CD4-positive, alpha-beta T cell (primary cell): ENCODE measurements at regions of chr15 and their contacts with region 1.

Region 1: DNA sequence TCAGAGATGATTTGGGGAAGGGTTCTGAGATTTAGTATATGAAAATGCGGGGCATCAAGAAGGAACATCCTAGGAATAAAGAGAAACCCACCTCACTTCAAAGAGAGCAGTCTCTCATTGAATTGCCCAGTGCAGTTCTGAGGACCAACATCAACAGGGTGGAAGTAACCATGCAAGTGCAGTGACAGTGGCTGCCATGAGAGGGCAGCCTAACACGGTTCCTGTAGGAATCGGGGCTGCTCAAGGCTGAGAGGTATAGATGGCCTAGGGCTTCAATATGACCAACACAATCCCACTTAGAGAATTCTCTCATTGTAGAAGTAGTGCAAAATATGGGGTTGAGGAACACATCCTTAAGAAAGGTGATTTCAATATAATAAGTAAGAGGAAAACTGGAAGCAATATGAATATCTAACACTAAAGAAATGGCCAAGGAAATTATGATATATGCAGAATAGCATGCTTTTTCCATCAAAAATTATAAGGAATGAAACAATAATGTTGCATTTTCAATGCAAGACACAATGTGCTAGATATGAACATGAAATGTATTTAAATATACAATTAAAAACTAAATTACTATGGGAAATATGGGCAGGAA is 51.1 kb upstream of the ARRDC4 start:
- DNase-seq: peak; percentile 22 to 71 (median 42)
- ATAC-seq: peak; percentile 67
- H3K4me3 ChIP-seq: no peak overlapping the region
- H3K4me3 Mint-ChIP-seq: no peak overlapping the region
- H3K27ac ChIP-seq: no peak overlapping the region
- H3K27ac Mint-ChIP-seq: no peak overlapping the region
- H3K4me1 ChIP-seq: no peaks in the 10 kb centered on the region
- H3K4me1 Mint-ChIP-seq: no peaks in the 10 kb centered on the region
- H3K27me3 ChIP-seq: peaks cover 0 to 2% of the 10 kb centered on the region in 2 experiments
- H3K27me3 Mint-ChIP-seq: peaks cover 19% of the 10 kb centered on the region
- CTCF ChIP-seq: peak; percentile 89

Region 2: DNA sequence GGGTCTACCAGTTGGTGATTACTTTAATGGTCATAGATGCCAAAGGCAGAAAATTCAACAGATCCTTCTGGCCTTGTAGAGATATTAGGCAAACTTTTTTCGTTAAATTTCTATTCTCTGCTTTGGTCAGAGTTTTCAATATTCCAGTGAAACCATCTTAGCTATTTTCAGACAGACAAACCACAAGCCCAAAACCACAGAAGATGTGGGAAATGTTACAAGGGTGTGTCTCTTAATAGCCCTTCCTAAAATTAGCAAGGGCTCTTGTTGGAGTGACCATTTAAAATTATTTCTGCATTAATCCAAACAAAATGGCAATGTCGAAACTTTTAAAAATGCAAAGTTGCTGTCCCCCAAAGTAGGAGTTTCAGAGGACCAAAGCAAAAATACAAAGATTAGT is 153.9 kb after region 1 on chr15:
- CTCF ChIA-PET with region 1: no interaction called
- POLR2A ChIA-PET with region 1: no interaction called
- intact Hi-C with region 1: no loop called
- DNase-seq: no peak
- ATAC-seq: no peak
- H3K4me3 ChIP-seq: no peak overlapping the region
- H3K4me3 Mint-ChIP-seq: no peak overlapping the region
- H3K27ac ChIP-seq: no peak overlapping the region
- H3K27ac Mint-ChIP-seq: no peak overlapping the region
- H3K4me1 ChIP-seq: no peaks in the 10 kb centered on the region
- H3K4me1 Mint-ChIP-seq: no peaks in the 10 kb centered on the region
- H3K27me3 ChIP-seq: no peaks in the 10 kb centered on the region
- H3K27me3 Mint-ChIP-seq: peaks cover 11% of the 10 kb centered on the region
- CTCF ChIP-seq: no peak

Region 3: DNA sequence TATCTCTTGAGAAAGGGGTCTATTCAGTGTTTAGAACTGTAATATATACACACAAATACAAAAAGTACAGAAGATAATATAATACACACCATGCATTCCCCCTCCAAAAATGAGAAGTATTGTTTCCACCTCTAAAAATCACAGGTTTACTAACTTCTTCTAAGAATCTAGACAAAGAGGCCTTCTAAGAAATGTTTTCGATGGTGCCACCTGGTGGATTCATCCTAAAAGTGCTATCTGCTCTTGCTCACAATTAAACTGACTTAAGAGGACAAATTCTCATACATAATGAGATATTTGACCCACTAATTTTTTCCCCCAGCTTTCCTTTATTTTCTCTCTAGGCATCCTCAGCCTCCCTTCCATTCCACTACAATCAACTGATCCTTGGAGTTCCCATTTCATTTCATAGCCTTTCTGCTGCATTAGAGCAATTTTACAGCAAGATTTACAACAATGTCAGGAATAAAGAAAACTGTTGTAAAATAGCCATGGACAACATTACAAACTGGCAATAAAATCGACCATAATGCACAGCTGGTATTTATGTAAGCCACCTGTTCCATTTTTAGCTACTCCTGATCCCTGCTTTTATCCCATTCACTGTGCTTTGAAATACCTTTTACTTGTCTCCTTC is 175.7 kb after region 1 on chr15:
- CTCF ChIA-PET with region 1: no interaction called
- POLR2A ChIA-PET with region 1: no interaction called
- intact Hi-C with region 1: loop called (anchors 1 kb)
- DNase-seq: peak in 9 of 14 experiments; percentile 6 to 63 (median 23)
- ATAC-seq: no peak
- H3K4me3 ChIP-seq: no peak overlapping the region
- H3K4me3 Mint-ChIP-seq: no peak overlapping the region
- H3K27ac ChIP-seq: no peak overlapping the region
- H3K27ac Mint-ChIP-seq: no peak overlapping the region
- H3K4me1 ChIP-seq: no peaks in the 10 kb centered on the region
- H3K4me1 Mint-ChIP-seq: no peaks in the 10 kb centered on the region
- H3K27me3 ChIP-seq: no peaks in the 10 kb centered on the region
- H3K27me3 Mint-ChIP-seq: no peaks in the 10 kb centered on the region
- CTCF ChIP-seq: peak; percentile 59

Region 4: GRCh38 chr15:98177924-98178592 is 268.7 kb after region 1 on chr15:
- CTCF ChIA-PET with region 1: no interaction called
- POLR2A ChIA-PET with region 1: no interaction called
- intact Hi-C with region 1: loop called (anchors 1 kb)
- DNase-seq: peak in 6 of 14 experiments; percentile 4 to 61 (median 36)
- ATAC-seq: peak; percentile 71
- H3K4me3 ChIP-seq: no peak overlapping the region
- H3K4me3 Mint-ChIP-seq: no peak overlapping the region
- H3K27ac ChIP-seq: no peak overlapping the region
- H3K27ac Mint-ChIP-seq: no peak overlapping the region
- H3K4me1 ChIP-seq: no peaks in the 10 kb centered on the region
- H3K4me1 Mint-ChIP-seq: peaks cover 11% of the 10 kb centered on the region
- H3K27me3 ChIP-seq: peaks cover 2 to 4% of the 10 kb centered on the region in 2 experiments
- H3K27me3 Mint-ChIP-seq: peaks cover 24% of the 10 kb centered on the region
- CTCF ChIP-seq: peak; percentile 68

Region 5: DNA sequence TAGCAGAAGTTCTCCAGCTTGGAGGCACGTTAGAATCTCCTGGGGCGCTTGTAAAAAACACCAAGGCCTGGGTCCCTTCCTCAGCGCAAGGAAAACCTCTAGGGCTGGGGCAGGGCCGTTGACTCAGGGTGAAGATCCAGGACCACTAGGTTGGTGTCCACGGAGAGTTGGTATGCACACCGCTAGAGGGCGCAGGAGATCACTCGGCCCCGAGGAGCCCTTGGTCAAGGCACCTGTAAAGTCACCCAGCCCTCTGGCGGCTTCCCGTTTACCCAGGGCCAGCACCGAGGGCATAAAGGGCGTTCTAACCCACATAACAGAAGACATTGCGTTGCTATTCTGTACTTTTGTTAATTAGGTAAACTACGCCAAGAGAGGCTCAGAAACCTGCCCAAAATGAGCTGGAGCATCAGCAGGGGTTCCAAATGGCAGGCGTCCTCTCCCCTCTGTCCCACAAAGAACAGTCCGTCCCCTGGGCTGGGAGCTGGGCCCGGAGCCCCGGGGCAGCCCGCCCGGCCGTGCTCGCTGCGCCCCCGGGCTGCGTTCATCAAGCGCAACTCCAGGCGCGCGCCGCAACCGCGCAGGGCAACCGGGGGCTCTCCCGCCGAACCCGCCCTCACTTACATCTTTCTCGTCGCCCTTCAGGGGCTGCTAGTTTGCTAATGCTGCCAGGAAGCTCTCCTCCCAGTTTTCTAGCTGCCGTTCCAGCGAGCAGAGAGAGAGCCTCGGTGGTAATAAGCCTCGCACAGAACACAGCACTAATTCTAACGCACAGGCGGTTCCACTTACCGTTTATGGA is 383.2 kb after region 1 on chr15:
- CTCF ChIA-PET with region 1: no interaction called
- POLR2A ChIA-PET with region 1: no interaction called
- intact Hi-C with region 1: loop called in 1 of 2 experiments (anchors 10 kb)
- DNase-seq: peak in 2 of 14 experiments; percentile 9 to 15
- ATAC-seq: no peak
- H3K4me3 ChIP-seq: no peak overlapping the region
- H3K4me3 Mint-ChIP-seq: no peak overlapping the region
- H3K27ac ChIP-seq: no peak overlapping the region
- H3K27ac Mint-ChIP-seq: no peak overlapping the region
- H3K4me1 ChIP-seq: peaks cover 5% of the 10 kb centered on the region
- H3K4me1 Mint-ChIP-seq: no peaks in the 10 kb centered on the region
- H3K27me3 ChIP-seq: peaks cover 10 to 15% of the 10 kb centered on the region in 2 experiments
- H3K27me3 Mint-ChIP-seq: peaks cover 52% of the 10 kb centered on the region
- CTCF ChIP-seq: no peak

Region 6: GRCh38 chr15:98421419-98422129 is 512.2 kb after region 1 on chr15:
- CTCF ChIA-PET with region 1: no interaction called
- POLR2A ChIA-PET with region 1: no interaction called
- intact Hi-C with region 1: loop called (anchors 2 to 5 kb)
- DNase-seq: peak; percentile 27 to 75 (median 47)
- ATAC-seq: no peak
- H3K4me3 ChIP-seq: peak overlapping the region; percentile 41
- H3K4me3 Mint-ChIP-seq: no peak overlapping the region
- H3K27ac ChIP-seq: no peak overlapping the region
- H3K27ac Mint-ChIP-seq: no peak overlapping the region
- H3K4me1 ChIP-seq: peaks cover 13% of the 10 kb centered on the region
- H3K4me1 Mint-ChIP-seq: peaks cover 5% of the 10 kb centered on the region
- H3K27me3 ChIP-seq: peaks cover 26 to 42% of the 10 kb centered on the region in 2 experiments
- H3K27me3 Mint-ChIP-seq: peaks cover 63% of the 10 kb centered on the region
- CTCF ChIP-seq: peak; percentile 98